ENCODE measurements at regions of chr17 and their contacts with region 1.

Region 1: DNA sequence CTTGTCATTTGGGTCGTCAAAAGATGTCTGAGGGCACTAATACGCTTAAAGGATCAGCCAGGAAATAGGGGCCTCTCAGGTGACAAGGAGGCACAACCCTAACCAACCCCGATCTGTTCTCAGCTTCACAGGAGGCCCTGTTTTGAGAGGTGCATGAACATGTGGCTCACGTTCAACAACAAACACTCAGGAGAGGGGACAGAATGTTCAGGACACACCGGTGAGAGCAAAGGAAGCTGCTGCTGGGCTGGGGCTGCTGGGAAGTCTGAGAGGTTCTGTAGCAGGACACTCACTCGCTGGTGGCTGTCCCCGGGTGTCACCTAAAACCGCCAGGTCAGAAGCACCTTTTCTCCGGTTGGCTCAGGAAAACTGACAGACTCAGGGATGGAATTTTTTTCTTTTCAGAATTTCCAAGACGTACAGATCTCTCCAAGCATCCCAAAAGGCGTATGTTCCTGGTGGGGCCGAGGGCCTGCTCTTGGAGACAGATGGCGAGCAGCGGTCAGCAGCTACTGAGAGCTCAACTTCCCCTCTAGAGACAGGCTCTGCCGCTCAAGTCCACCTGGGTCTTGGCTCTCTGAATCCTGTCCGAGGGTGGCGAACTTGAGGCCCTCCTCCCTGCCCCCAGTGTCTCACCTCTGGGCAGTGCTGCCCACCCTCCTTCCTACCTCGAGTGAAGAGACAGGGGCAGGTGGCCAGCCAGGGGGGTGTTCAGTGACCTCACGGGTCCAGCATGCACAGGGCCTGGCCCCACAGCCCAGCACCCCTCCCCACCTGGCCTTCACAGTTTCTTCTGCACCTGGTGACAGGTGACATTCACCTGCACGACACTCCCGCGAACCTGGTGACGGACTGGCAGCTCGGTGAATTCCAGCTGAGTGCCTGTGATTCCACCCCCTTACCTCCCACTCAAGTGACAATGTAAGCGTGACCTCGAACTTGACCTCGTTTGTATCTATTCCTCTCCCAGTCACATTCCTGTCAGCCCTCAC is 22.9 kb downstream of the CLUH start:
- DNase-seq: peak in 2 of 4 donors; percentile 56 to 78
- ATAC-seq: peak; percentile 68
- H3K4me3 ChIP-seq: no peak overlapping the region
- H3K27ac ChIP-seq: peak overlapping the region; percentile 19 to 39
- H3K4me1 ChIP-seq: peaks cover 15% of the 10 kb centered on the region in 2 donors
- H3K27me3 ChIP-seq: no peaks in the 10 kb centered on the region
- CTCF ChIP-seq: no peak

Region 2: DNA sequence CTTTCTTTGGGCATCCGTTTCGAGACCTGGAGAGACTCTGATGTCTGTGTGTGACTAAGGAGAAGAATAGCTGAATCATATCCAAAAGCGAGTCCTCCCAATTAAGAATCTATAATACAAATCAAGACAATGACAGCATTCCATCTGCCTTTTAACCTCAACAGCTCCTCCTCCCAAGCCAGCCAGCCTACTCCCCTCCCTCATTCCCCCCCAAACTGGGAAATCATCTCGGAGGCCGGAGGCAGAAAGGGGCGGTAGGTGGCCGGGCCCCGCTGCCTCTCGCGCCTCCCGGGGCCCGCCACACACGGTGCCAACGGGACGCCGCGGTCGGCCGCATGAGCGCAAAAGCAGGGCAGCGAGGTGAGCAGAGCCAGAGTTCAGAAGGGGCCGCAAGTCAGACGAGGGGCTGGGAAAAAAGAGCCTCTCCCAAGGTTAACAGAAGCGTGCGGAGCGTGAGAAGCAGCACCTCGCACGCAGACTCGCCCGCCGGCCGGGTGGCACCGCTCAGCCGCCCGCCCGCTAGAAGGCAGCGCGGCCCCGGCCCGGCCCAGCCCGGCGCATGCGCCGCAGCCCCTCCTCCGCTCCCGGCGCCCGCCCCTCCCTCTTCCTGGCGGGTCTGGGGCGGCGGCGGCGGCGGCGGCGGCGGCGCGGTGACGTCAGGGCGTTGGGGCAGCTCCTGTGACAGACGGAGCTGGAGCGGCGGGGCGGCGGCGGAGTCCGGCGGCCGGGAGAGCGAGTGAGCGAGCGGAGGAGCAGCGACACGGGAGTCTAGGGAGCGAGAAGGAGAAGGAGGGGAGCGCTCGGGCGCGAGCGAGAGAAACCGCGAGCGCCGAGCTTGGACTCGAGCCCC is 95.5 kb before region 1 on chr17 and contains the start of gene PAFAH1B1:
- intact Hi-C with region 1: loop called in 1 of 2 experiments (anchors 10 kb)
- DNase-seq: peak; percentile 84 to 99 (median 92)
- ATAC-seq: peak; percentile 90
- H3K4me3 ChIP-seq: peak within 1 kb of the TSS; percentile 92 to 98
- H3K27ac ChIP-seq: peak within 1 kb of the TSS; percentile 97 to 98
- H3K4me1 ChIP-seq: peaks cover 19 to 44% of the 10 kb centered on the region in 2 donors
- H3K27me3 ChIP-seq: no peaks in the 10 kb centered on the region
- CTCF ChIP-seq: no peak
- polyA plus RNA-seq, gene PAFAH1B1: 148 to 188 (median 157) TPM